Adrenal gland (tissue), 19 donors: ENCODE measurements at regions of chr15 and their contacts with region 1.

Region 1: GRCh38 chr15:62060113-62060895 is at the start of gene VPS13C:
- DNase-seq: peak; percentile 93 to 97 (median 94)
- H3K4me3 ChIP-seq: peak within 1 kb of the TSS; percentile 3 to 98 (median 84)
- H3K27ac ChIP-seq: peak within 1 kb of the TSS; percentile 87 to 98 (median 90)
- H3K4me1 ChIP-seq: peaks cover 0 to 20% of the 10 kb centered on the region in 2 donors
- H3K27me3 ChIP-seq: no peaks in the 10 kb centered on the region
- CTCF ChIP-seq: peak; percentile 51 to 95 (median 74)
- POLR2A ChIP-seq: peak; percentile 75 to 91
- total RNA-seq, gene VPS13C: 43.1 to 114 (median 59.5) TPM

Region 2: DNA sequence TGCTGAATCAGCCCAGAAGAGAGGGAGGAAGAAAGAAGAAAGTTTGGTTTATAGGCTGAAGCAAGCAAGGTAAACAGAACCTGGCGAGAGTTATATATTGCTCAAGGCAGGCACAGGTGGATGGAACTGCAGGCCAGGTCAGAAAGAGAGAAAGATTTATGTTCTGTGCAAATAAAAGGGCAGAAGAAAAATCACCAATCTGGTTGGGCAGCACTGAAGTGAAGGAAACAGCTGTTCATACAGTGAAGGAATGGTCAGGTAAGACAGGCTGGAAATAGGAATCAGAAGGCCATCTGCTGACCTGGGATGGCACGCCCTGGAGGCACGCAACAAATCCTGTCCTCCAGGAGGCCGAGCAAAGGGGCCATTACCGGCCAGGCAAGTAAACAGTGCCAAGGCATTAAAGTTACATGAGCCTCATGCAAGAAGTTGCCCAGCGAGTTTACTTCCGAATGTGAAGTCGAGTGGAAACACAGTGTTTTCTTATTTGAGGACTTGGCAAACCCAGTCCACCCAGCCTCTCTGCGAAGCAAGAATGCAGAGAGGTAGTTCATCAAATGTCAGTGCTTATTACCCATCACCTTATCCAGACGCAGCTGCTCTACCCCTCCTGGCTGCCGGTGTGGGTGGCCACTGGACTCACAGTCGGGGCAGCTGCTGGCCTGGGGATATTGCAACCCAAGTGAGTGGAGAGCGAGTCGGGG is 309.8 kb before region 1 on chr15:
- intact Hi-C with region 1: no loop called
- DNase-seq: no peak
- H3K4me3 ChIP-seq: no peak overlapping the region
- H3K27ac ChIP-seq: no peak overlapping the region
- H3K4me1 ChIP-seq: no peaks in the 10 kb centered on the region
- H3K27me3 ChIP-seq: no peaks in the 10 kb centered on the region
- CTCF ChIP-seq: no peak
- POLR2A ChIP-seq: no peak

Region 3: GRCh38 chr15:61871926-61872522 is 188.3 kb before region 1 on chr15:
- intact Hi-C with region 1: loop called in 1 of 2 experiments (anchors 10 kb)
- DNase-seq: no peak
- H3K4me3 ChIP-seq: no peak overlapping the region
- H3K27ac ChIP-seq: no peak overlapping the region
- H3K4me1 ChIP-seq: no peaks in the 10 kb centered on the region
- H3K27me3 ChIP-seq: no peaks in the 10 kb centered on the region
- CTCF ChIP-seq: peak; percentile 40 to 64 (median 52)
- POLR2A ChIP-seq: no peak

Region 4: GRCh38 chr15:61997786-61998185 is 62.5 kb before region 1 on chr15:
- intact Hi-C with region 1: no loop called
- DNase-seq: no peak
- H3K4me3 ChIP-seq: no peak overlapping the region
- H3K27ac ChIP-seq: no peak overlapping the region
- H3K4me1 ChIP-seq: no peaks in the 10 kb centered on the region
- H3K27me3 ChIP-seq: no peaks in the 10 kb centered on the region
- CTCF ChIP-seq: no peak
- POLR2A ChIP-seq: no peak

Region 5: DNA sequence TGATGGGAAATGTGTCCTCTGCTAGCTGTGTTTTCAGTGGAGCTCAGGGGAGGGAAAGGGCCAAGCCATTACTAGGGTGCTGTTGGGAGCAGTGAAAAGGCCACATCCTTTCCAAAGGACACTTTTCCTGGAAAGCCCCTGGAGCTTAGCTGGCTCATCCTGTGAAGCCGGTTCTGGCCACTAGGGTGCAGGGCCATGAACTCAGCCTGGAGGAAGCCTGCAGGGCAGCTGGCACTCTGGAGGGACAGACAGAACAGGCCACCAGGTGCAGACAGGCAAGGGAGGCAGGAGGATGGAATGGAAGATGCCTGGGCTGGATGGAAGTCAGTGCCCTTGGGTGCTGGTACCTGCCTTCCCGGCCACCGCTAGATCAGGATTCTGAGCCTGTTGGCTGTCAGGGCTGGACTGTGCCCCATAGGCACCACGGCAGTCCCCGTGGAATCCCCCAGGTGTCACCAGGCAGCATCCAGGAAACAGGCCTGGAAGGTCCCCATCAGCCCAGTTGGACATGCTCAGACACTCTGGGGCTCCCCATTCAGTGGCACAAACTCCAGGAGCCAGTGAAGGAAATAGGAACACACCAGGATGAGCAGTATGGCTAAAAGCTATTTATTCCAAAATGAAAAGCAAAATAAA is 180.9 kb after region 1 on chr15:
- intact Hi-C with region 1: no loop called
- DNase-seq: peak in 2 of 7 donors; percentile 6 to 18
- H3K4me3 ChIP-seq: no peak overlapping the region
- H3K27ac ChIP-seq: no peak overlapping the region
- H3K4me1 ChIP-seq: no peaks in the 10 kb centered on the region
- H3K27me3 ChIP-seq: no peaks in the 10 kb centered on the region
- CTCF ChIP-seq: peak in 2 of 6 experiments; percentile 9 to 24
- POLR2A ChIP-seq: no peak

Region 6: GRCh38 chr15:62306851-62307504 is 246.7 kb after region 1 on chr15:
- intact Hi-C with region 1: loop called in 1 of 2 experiments (anchors 10 kb)
- DNase-seq: peak; percentile 40 to 86 (median 63)
- H3K4me3 ChIP-seq: no peak overlapping the region
- H3K27ac ChIP-seq: no peak overlapping the region
- H3K4me1 ChIP-seq: peaks cover 0 to 7% of the 10 kb centered on the region in 2 donors
- H3K27me3 ChIP-seq: no peaks in the 10 kb centered on the region
- CTCF ChIP-seq: peak; percentile 43 to 75 (median 66)
- POLR2A ChIP-seq: no peak